Colonic mucosa (tissue), 4 donors: ENCODE measurements at regions of chr7 and their contacts with region 1.

Region 1: GRCh38 chr7:99990460-99990852 is 14.6 kb upstream of the AZGP1 start:
- DNase-seq: no peak
- H3K4me3 ChIP-seq: no peak overlapping the region
- H3K27ac ChIP-seq: no peak overlapping the region
- H3K4me1 ChIP-seq: no peaks in the 10 kb centered on the region
- H3K27me3 ChIP-seq: no peaks in the 10 kb centered on the region
- CTCF ChIP-seq: no peak

Region 2: DNA sequence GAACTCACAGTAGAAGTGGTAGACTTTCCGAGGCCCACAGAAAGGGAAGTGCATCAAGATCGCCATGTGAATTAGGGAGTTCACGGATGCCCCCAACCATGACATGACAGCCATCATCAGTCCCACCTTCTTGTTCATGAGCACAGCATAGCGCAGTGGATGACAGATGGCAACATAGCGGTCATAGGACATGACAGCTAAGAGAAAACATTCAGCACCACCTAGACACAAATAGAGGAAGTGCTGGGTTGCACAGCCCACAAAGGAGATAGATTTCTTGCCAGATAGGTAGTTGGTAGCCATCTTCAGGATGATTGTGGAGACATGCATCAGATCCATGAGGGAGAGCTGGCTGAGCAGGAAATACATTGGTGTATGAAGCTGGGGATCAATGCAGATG is 114.0 kb before region 1 on chr7:
- intact Hi-C with region 1: no loop called
- DNase-seq: no peak
- H3K4me3 ChIP-seq: no peak overlapping the region
- H3K27ac ChIP-seq: no peak overlapping the region
- H3K4me1 ChIP-seq: no peaks in the 10 kb centered on the region
- H3K27me3 ChIP-seq: no peaks in the 10 kb centered on the region
- CTCF ChIP-seq: no peak

Region 3: GRCh38 chr7:99910976-99911375 is 79.5 kb before region 1 on chr7:
- intact Hi-C with region 1: loop called (anchors 5 kb)
- DNase-seq: no peak
- H3K4me3 ChIP-seq: no peak overlapping the region
- H3K27ac ChIP-seq: no peak overlapping the region
- H3K4me1 ChIP-seq: no peaks in the 10 kb centered on the region
- H3K27me3 ChIP-seq: no peaks in the 10 kb centered on the region
- CTCF ChIP-seq: no peak

Region 4: GRCh38 chr7:100049441-100050311 is 59.2 kb after region 1 on chr7 and contains the start of gene ZSCAN21:
- intact Hi-C with region 1: loop called (anchors 5 kb)
- DNase-seq: peak; percentile 84
- H3K4me3 ChIP-seq: peak within 1 kb of the TSS; percentile 64
- H3K27ac ChIP-seq: peak within 1 kb of the TSS; percentile 90
- H3K4me1 ChIP-seq: peaks cover 5% of the 10 kb centered on the region
- H3K27me3 ChIP-seq: no peaks in the 10 kb centered on the region
- CTCF ChIP-seq: no peak
- total RNA-seq, gene ZSCAN21: 6.2 to 7.7 TPM

Region 5: DNA sequence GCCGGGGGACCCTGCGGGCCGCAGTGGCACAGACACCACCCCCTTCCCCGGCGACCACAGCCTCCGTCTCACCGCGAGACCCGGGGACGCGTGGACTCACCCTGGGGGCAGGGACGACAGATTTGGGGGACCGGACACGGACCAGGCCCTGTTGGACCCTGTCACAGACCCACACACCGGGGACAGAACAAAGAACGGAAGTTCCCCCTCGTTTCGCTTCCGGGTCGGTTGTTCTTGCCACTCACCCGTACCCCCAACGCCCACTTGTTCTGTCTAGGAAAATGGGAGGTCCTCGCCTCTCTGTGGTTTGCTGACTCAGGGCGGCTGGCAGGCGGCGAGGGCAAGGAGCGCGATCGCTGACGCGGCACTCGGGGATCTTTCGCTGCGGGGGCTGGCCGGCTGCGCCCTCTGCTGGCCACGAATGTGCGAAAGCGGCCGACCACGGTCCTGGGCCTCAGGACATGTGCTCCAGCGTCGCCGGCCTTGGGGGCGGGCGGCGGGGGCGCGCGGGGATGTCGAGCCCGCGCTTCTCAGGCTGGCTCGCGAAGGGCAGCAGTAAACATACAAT is 91.2 kb after region 1 on chr7 and contains the start of gene ZNF3:
- intact Hi-C with region 1: loop called (anchors 5 kb)
- DNase-seq: peak; percentile 99
- H3K4me3 ChIP-seq: peak within 1 kb of the TSS; percentile 97
- H3K27ac ChIP-seq: peak within 1 kb of the TSS; percentile 82
- H3K4me1 ChIP-seq: peaks cover 19% of the 10 kb centered on the region
- H3K27me3 ChIP-seq: no peaks in the 10 kb centered on the region
- CTCF ChIP-seq: peak; percentile 94
- total RNA-seq, gene ZNF3: 30.1 to 31.9 TPM

Region 6: GRCh38 chr7:100102950-100103840 is 112.7 kb after region 1 on chr7:
- intact Hi-C with region 1: no loop called
- DNase-seq: no peak
- H3K4me3 ChIP-seq: no peak overlapping the region
- H3K27ac ChIP-seq: no peak overlapping the region
- H3K4me1 ChIP-seq: peaks cover 5% of the 10 kb centered on the region
- H3K27me3 ChIP-seq: no peaks in the 10 kb centered on the region
- CTCF ChIP-seq: no peak

Region 7: GRCh38 chr7:100132697-100133151 is 142.3 kb after region 1 on chr7:
- intact Hi-C with region 1: loop called (anchors 5 kb)
- DNase-seq: peak; percentile 79
- H3K4me3 ChIP-seq: no peak overlapping the region
- H3K27ac ChIP-seq: no peak overlapping the region
- H3K4me1 ChIP-seq: peaks cover 8% of the 10 kb centered on the region
- H3K27me3 ChIP-seq: no peaks in the 10 kb centered on the region
- CTCF ChIP-seq: peak; percentile 91